Natural killer cell (primary cell): ENCODE measurements at regions of chr12 and their contacts with region 1.

Region 1: GRCh38 chr12:6167327-6168259 is 32.6 kb upstream of the CD9 start:
- DNase-seq: peak; percentile 30 to 60
- ATAC-seq: peak; percentile 81 to 87 (median 86)
- H3K4me3 ChIP-seq: no peak overlapping the region
- H3K4me3 Mint-ChIP-seq: no peak overlapping the region
- H3K27ac ChIP-seq: peak overlapping the region; percentile 72
- H3K27ac Mint-ChIP-seq: peak overlapping the region; percentile 54 to 93
- H3K4me1 ChIP-seq: peaks cover 23% of the 10 kb centered on the region
- H3K4me1 Mint-ChIP-seq: peaks cover 10 to 19% of the 10 kb centered on the region in 2 donors
- H3K27me3 ChIP-seq: no peaks in the 10 kb centered on the region
- H3K27me3 Mint-ChIP-seq: no peaks in the 10 kb centered on the region
- CTCF ChIP-seq: no peak

Region 2: GRCh38 chr12:6069437-6070107 is 98.0 kb before region 1 on chr12:
- intact Hi-C with region 1: loop called (anchors 10 kb)
- DNase-seq: peak in 1 of 2 donors; percentile 50
- ATAC-seq: peak in 2 of 3 donors; percentile 21 to 22
- H3K4me3 ChIP-seq: no peak overlapping the region
- H3K4me3 Mint-ChIP-seq: no peak overlapping the region
- H3K27ac ChIP-seq: no peak overlapping the region
- H3K27ac Mint-ChIP-seq: no peak overlapping the region
- H3K4me1 ChIP-seq: peaks cover 12% of the 10 kb centered on the region
- H3K4me1 Mint-ChIP-seq: peaks cover 17% of the 10 kb centered on the region in 2 donors
- H3K27me3 ChIP-seq: no peaks in the 10 kb centered on the region
- H3K27me3 Mint-ChIP-seq: peaks cover 47 to 56% of the 10 kb centered on the region in 2 donors
- CTCF ChIP-seq: no peak

Region 3: DNA sequence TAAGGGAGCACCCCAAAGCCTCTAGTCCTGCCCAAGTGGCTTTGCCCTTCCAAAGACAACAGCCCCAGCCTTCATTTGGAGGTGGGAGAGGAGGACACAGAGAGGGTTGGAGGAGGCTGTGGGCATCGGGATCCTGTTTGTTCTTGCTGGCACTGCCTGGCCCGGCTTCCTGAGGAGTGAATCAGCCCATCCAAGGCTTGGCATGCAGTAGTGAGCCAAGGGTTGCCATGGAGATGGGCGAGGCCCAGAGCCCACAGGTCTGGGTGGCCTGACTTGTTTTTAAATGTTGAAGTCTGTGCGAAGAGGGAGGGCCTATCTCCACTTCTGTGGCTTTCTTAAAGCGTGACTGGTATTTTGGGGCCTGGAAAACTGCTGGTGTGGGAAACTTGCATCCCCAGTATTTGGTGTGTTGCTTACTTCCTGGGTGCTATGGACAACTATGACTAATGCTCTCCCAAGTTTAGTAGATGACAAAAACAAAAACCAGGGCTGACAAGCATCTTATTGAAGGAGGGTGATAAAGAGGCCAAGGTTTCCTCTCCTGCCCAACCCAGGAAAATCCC is 48.4 kb after region 1 on chr12:
- intact Hi-C with region 1: no loop called
- DNase-seq: no peak
- ATAC-seq: no peak
- H3K4me3 ChIP-seq: no peak overlapping the region
- H3K4me3 Mint-ChIP-seq: no peak overlapping the region
- H3K27ac ChIP-seq: no peak overlapping the region
- H3K27ac Mint-ChIP-seq: no peak overlapping the region
- H3K4me1 ChIP-seq: no peaks in the 10 kb centered on the region
- H3K4me1 Mint-ChIP-seq: no peaks in the 10 kb centered on the region
- H3K27me3 ChIP-seq: no peaks in the 10 kb centered on the region
- H3K27me3 Mint-ChIP-seq: peaks cover 0 to 9% of the 10 kb centered on the region in 2 donors
- CTCF ChIP-seq: no peak

Region 4: GRCh38 chr12:6807170-6807569 is 639.6 kb after region 1 on chr12:
- intact Hi-C with region 1: no loop called
- DNase-seq: no peak
- ATAC-seq: no peak
- H3K4me3 ChIP-seq: no peak overlapping the region
- H3K4me3 Mint-ChIP-seq: no peak overlapping the region
- H3K27ac ChIP-seq: no peak overlapping the region
- H3K27ac Mint-ChIP-seq: no peak overlapping the region
- H3K4me1 ChIP-seq: no peaks in the 10 kb centered on the region
- H3K4me1 Mint-ChIP-seq: no peaks in the 10 kb centered on the region
- H3K27me3 ChIP-seq: no peaks in the 10 kb centered on the region
- H3K27me3 Mint-ChIP-seq: peaks cover 6 to 14% of the 10 kb centered on the region in 2 donors
- CTCF ChIP-seq: no peak